Posterior vena cava (tissue), 2 donors: ENCODE measurements at regions of chr9 and their contacts with region 1.

Region 1: GRCh38 chr9:11149065-11149464 is 536.3 kb upstream of the PTPRD start:
- DNase-seq: no peak

Region 2: GRCh38 chr9:10661376-10661775 is 487.7 kb before region 1 on chr9:
- intact Hi-C with region 1: no loop called
- DNase-seq: no peak

Region 3: DNA sequence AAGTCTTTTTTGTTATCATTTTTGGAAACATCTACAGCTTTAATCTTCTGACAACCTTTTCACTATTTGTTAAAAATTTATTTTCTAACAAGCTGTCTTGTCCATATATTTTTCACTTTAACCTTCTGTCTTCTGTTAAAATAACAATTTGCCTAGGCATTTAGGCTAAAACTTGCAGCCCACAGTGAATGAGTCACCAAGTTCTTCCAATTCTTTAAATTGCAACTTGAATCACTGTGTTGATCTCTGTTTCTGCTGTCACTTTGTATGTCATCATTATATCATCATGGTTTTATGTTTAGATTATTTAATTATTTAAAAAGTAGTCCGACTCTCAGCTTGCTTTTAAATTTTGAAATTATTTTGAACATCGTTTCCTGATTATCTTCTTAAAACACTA is 62.5 kb before region 1 on chr9:
- intact Hi-C with region 1: no loop called
- DNase-seq: no peak

Region 4: DNA sequence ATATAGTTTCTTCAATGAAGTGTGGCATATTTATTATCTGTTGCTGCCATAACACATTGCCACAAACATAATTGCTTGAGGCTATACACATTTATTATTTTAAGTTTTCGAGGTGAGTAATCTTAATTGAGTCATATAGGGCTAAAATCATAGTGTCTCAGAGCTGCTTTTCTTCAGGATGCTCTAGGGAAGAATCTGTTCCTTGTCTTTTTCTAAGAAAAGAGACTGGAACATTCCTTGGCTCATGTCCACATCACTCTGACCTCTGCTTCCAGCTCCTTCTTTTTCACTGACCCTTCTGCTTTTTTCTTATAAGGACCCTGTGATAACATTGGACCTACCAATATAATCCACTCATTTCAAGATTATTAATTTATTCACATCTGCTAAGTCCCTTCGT is 911.7 kb after region 1 on chr9:
- intact Hi-C with region 1: loop called in 1 of 2 experiments (anchors 5 kb)
- DNase-seq: no peak